Activated CD4-positive, alpha-beta T cell treated with anti-CD3 and anti-CD28 coated beads, Interleukin-2, amount 10 ng/mL, durations not matched to agents 7 days and 5 days (primary cell): ENCODE measurements at regions of chr2 and their contacts with region 1.

Region 1: DNA sequence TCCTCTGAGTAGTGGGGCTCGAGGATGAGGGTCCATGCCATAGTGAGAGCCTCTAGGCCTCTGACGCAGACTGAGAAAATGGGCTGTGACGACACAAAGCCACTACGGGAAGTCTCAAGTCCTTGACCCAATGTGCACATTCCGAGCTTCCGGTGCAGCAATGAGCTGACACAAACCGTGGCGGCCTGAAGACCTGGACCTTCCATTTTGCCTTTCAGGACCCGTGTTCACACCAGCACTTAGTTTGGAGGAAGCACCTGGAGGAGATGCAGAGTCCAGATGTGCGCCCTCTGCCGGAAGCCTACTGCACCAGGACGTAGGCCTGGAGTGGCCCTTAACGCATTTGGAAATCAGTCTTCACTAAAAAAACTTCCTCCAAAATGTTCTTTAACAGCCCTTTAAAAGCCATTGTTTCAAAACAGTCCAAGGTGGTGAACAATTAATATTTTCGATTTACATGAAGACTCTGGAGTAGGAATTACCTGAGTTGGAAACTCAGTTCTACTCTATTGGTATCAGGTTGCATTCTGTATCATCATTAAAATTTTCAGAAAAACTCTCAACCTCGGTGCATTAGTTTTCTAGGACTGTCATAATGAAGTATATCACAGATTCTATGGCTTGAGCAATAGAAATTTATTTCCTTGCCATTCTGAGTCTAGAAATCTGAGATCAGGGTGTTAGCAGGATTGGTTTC is 33.9 kb downstream of the BMP10 start:
- DNase-seq: peak; percentile 71
- H3K4me3 Mint-ChIP-seq: no peak overlapping the region
- H3K27ac Mint-ChIP-seq: peak overlapping the region; percentile 54
- H3K4me1 Mint-ChIP-seq: peaks cover 45% of the 10 kb centered on the region
- H3K27me3 Mint-ChIP-seq: no peaks in the 10 kb centered on the region

Region 2: GRCh38 chr2:68734688-68735525 is 102.4 kb before region 1 on chr2 and contains the start of gene ARHGAP25:
- CTCF ChIA-PET with region 1: no interaction called
- POLR2A ChIA-PET with region 1: no interaction called
- DNase-seq: peak; percentile 71
- H3K4me3 Mint-ChIP-seq: no peak within 1 kb of the TSS
- H3K27ac Mint-ChIP-seq: no peak within 1 kb of the TSS
- H3K4me1 Mint-ChIP-seq: peaks cover 38% of the 10 kb centered on the region
- H3K27me3 Mint-ChIP-seq: no peaks in the 10 kb centered on the region
- total RNA-seq, gene ARHGAP25: 94.9 to 97.8 TPM

Region 3: GRCh38 chr2:68849579-68850030 is 12.3 kb after region 1 on chr2:
- CTCF ChIA-PET with region 1: interaction called, 15 read pairs
- POLR2A ChIA-PET with region 1: no interaction called
- DNase-seq: no peak
- H3K4me3 Mint-ChIP-seq: no peak overlapping the region
- H3K27ac Mint-ChIP-seq: no peak overlapping the region
- H3K4me1 Mint-ChIP-seq: no peaks in the 10 kb centered on the region
- H3K27me3 Mint-ChIP-seq: peaks cover 26% of the 10 kb centered on the region